GM12878 (cell line): ENCODE measurements at regions of chr17 and their contacts with region 1.

Region 1: DNA sequence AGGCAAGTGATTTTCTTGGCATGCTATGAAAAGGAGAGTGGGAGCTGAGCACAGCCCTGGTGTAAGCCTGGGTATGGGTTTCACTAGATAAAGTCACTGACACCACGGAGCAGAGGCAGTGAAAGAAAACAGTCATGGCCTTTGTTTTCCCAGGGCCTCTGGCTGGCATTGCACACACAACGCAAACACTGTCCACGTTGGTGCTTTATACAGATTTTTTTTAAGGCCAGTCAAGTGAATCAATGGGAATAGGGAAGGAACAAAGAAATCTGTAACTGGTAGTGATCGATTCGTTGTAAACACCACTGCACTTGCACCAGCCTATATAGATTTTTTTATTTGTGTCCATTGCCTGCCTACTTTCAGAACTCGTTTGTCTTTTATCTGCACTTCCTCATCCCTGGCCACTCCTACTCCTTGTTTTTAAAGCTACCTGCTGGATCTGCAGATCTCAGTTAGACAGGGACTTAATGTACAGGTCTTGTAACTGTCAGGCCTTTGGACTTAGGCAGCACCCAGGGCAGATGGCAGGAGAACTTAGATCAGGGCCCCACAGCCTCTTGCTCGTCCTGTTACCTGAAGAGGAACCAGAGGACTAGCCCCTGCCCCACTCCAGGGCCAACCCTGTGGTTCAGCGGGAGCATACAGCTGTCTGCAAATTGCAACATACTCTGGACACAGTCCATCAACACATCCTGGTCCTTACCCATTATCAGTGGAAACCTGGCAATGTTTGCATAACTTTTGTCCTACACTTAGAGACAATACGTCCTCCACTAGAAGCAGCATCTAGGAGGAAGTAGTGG is 10.6 kb upstream of the TMIGD1 start:
- DNase-seq: no peak
- ATAC-seq: no peak
- H3K4me3 ChIP-seq: no peak overlapping the region
- H3K27ac ChIP-seq: no peak overlapping the region
- H3K4me1 ChIP-seq: peaks cover 8% of the 10 kb centered on the region
- H3K27me3 ChIP-seq: no peaks in the 10 kb centered on the region
- CTCF ChIP-seq: no peak
- EP300 ChIP-seq: no peak
- POLR2A ChIP-seq: no peak
- RAD21 ChIP-seq: no peak

Region 2: GRCh38 chr17:30291543-30292285 is 52.8 kb before region 1 on chr17 and contains the start of gene BLMH:
- CTCF ChIA-PET with region 1: interaction called, 13 read pairs
- POLR2A ChIA-PET with region 1: no interaction called
- RAD21 ChIA-PET with region 1: interaction called, 4 read pairs
- SMC1A ChIA-PET with region 1: interaction called, 9 read pairs
- in situ Hi-C with region 1: no loop called
- intact Hi-C with region 1: no loop called
- DNase-seq: no peak
- ATAC-seq: peak; percentile 94
- H3K4me3 ChIP-seq: peak within 1 kb of the TSS; percentile 92
- H3K27ac ChIP-seq: peak within 1 kb of the TSS; percentile 59
- H3K4me1 ChIP-seq: no peaks in the 10 kb centered on the region
- H3K27me3 ChIP-seq: no peaks in the 10 kb centered on the region
- CTCF ChIP-seq: no peak
- EP300 ChIP-seq: no peak
- POLR2A ChIP-seq: peak; percentile 84
- RAD21 ChIP-seq: no peak
- polyA plus RNA-seq, gene BLMH: 16.1 to 34.2 TPM

Region 3: DNA sequence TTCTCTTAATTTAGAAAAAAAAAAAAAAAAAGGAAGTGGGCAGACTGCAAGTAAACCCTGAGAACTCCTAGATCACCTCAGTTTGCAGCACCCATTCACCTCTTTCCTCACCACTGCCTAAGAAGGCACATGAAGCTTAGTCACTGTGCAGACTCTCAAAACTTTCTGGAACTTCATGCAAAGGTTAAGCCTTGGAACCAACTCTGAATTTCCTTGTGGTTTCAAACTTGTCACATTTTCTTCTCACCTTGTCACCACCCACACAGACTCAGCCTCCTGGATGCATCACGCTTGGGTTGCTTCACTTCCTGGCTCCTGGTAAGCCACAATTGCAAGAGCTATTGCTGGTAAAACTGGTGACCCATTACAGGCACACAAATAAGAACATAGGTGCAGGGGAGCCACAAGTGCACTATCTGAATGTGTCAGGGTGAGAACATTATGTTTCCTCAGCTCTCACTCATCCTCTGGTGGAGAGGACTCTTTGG is 19.3 kb after region 1 on chr17:
- CTCF ChIA-PET with region 1: interaction called, 11 read pairs
- POLR2A ChIA-PET with region 1: no interaction called
- RAD21 ChIA-PET with region 1: interaction called, 8 read pairs
- SMC1A ChIA-PET with region 1: interaction called, 24 read pairs
- in situ Hi-C with region 1: no loop called
- intact Hi-C with region 1: no loop called
- DNase-seq: peak; percentile 99
- ATAC-seq: peak; percentile 97
- H3K4me3 ChIP-seq: no peak overlapping the region
- H3K27ac ChIP-seq: no peak overlapping the region; the same call in 1 of the 2 replicates
- H3K4me1 ChIP-seq: peaks cover 16% of the 10 kb centered on the region
- H3K27me3 ChIP-seq: no peaks in the 10 kb centered on the region
- CTCF ChIP-seq: no peak
- EP300 ChIP-seq: peak in 1 of 2 experiments; percentile 86; a peak in 3 of 4 replicates
- POLR2A ChIP-seq: no peak
- RAD21 ChIP-seq: 0 out of 2 replicates have a peak, but pooled peaks have one; percentile 9

Region 4: GRCh38 chr17:30378824-30379302 is 34.4 kb after region 1 on chr17 and contains the start of gene CPD:
- CTCF ChIA-PET with region 1: interaction called, 22 read pairs
- POLR2A ChIA-PET with region 1: interaction called, 7 read pairs
- RAD21 ChIA-PET with region 1: interaction called, 18 read pairs
- SMC1A ChIA-PET with region 1: interaction called, 18 read pairs
- in situ Hi-C with region 1: no loop called
- intact Hi-C with region 1: loop called (anchors 2 kb)
- DNase-seq: peak; percentile 69
- ATAC-seq: peak; percentile 90
- H3K4me3 ChIP-seq: peak within 1 kb of the TSS; percentile 82
- H3K27ac ChIP-seq: peak within 1 kb of the TSS; percentile 43
- H3K4me1 ChIP-seq: peaks cover 32% of the 10 kb centered on the region
- H3K27me3 ChIP-seq: no peaks in the 10 kb centered on the region
- CTCF ChIP-seq: no peak
- EP300 ChIP-seq: no peak
- POLR2A ChIP-seq: peak; percentile 91
- RAD21 ChIP-seq: no peak
- polyA plus RNA-seq, gene CPD: 3.5 to 4.5 TPM

Region 5: GRCh38 chr17:30477083-30477773 is 132.7 kb after region 1 on chr17 and contains the start of gene GOSR1:
- CTCF ChIA-PET with region 1: interaction called, 45 read pairs
- POLR2A ChIA-PET with region 1: no interaction called
- RAD21 ChIA-PET with region 1: interaction called, 19 read pairs
- SMC1A ChIA-PET with region 1: interaction called, 34 read pairs
- in situ Hi-C with region 1: no loop called
- intact Hi-C with region 1: loop called (anchors 1 kb)
- DNase-seq: peak; percentile 79
- ATAC-seq: peak; percentile 99
- H3K4me3 ChIP-seq: peak within 1 kb of the TSS; percentile 93
- H3K27ac ChIP-seq: peak within 1 kb of the TSS; percentile 99
- H3K4me1 ChIP-seq: peaks cover 7% of the 10 kb centered on the region
- H3K27me3 ChIP-seq: no peaks in the 10 kb centered on the region
- CTCF ChIP-seq: peak; percentile 72 to 88 (median 83)
- EP300 ChIP-seq: no peak
- POLR2A ChIP-seq: peak; percentile 100
- RAD21 ChIP-seq: peak; percentile 57
- polyA plus RNA-seq, gene GOSR1: 71.0 to 99.3 TPM

Region 6: DNA sequence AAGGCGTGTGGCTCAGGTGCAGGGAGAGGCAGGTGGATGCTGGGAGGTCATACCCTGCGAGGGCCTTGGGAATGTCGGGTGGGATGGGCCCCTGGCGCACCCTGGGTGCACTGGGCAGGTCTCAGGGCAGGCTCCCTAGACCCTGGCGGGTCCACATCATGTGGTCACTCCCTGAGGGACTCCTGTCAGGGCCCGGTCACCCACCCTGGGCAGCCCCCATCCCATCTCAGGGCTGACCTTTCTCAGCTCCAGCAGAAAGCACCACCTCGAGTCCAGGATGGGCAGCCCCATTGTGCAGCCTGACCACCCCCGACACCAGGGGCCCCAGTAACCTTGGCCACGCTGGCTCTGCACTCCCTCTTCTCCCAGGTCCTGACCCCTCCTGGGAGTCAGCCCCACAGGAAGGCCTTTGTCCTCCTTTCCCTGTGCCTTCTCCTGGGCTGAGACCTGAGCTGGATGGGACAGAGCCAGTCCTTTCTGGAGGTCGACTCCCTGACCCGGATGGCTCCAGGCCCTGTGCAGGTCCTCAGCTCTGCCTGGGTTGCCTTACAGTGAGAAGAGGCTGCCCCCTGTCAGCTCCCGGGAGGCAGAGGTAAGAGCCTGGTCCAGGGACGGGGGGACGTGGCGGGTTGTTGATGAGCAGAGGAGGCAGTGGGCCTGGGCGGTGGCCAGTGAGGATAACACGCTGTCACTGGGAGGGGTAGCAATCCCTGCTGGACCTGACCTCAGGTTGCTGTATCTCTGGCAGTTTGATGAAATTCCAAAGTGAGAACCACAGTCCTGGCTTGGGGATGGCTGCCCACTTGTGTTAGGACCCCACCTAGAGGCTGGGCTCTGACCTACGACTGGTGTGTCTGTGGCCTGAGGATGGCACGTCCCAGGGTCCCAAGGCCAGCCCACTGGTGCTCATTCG is 210.6 kb after region 1 on chr17:
- CTCF ChIA-PET with region 1: interaction called, 10 read pairs
- POLR2A ChIA-PET with region 1: interaction called, 3 read pairs
- RAD21 ChIA-PET with region 1: interaction called, 6 read pairs
- SMC1A ChIA-PET with region 1: no interaction called
- in situ Hi-C with region 1: no loop called
- intact Hi-C with region 1: loop called (anchors 5 kb)
- DNase-seq: no peak
- ATAC-seq: peak; percentile 27; the same call in 1 of the 3 replicates
- H3K4me3 ChIP-seq: no peak overlapping the region
- H3K27ac ChIP-seq: no peak overlapping the region
- H3K4me1 ChIP-seq: peaks cover 10% of the 10 kb centered on the region
- H3K27me3 ChIP-seq: no peaks in the 10 kb centered on the region; a peak in 1 of 4 replicates
- CTCF ChIP-seq: peak; percentile 15 to 30 (median 19); a peak in 3 of 6 replicates
- EP300 ChIP-seq: no peak
- POLR2A ChIP-seq: no peak
- RAD21 ChIP-seq: no peak

Region 7: GRCh38 chr17:30716461-30717300 is 372.2 kb after region 1 on chr17:
- CTCF ChIA-PET with region 1: interaction called, 17 read pairs
- POLR2A ChIA-PET with region 1: no interaction called
- RAD21 ChIA-PET with region 1: interaction called, 7 read pairs
- SMC1A ChIA-PET with region 1: interaction called, 21 read pairs
- in situ Hi-C with region 1: loop called (anchors 5 kb)
- intact Hi-C with region 1: loop called (anchors 5 kb)
- DNase-seq: no peak
- ATAC-seq: peak; percentile 12; the same call in 1 of the 3 replicates
- H3K4me3 ChIP-seq: no peak overlapping the region
- H3K27ac ChIP-seq: no peak overlapping the region
- H3K4me1 ChIP-seq: no peaks in the 10 kb centered on the region; the same call in 1 of the 2 replicates
- H3K27me3 ChIP-seq: no peaks in the 10 kb centered on the region
- CTCF ChIP-seq: peak; percentile 11 to 38 (median 28); a peak in 4 of 6 replicates
- EP300 ChIP-seq: no peak
- POLR2A ChIP-seq: no peak
- RAD21 ChIP-seq: peak; percentile 26; the same call in 1 of the 2 replicates